OCI-LY7 (cell line): ENCODE measurements at regions of chr10 and their contacts with region 1.

Region 1: GRCh38 chr10:103367782-103368518 is at the start of gene TAF5:
- DNase-seq: peak; percentile 98
- H3K4me3 ChIP-seq: peak within 1 kb of the TSS; percentile 84
- H3K27ac ChIP-seq: peak within 1 kb of the TSS; percentile 73
- H3K4me1 ChIP-seq: peaks cover 26% of the 10 kb centered on the region
- CTCF ChIP-seq: no peak
- total RNA-seq, gene TAF5: 15.9 and 20.2 TPM in 2 replicates

Region 2: GRCh38 chr10:103350501-103351260 is 17.3 kb before region 1 on chr10 and contains the start of gene PCGF6:
- CTCF ChIA-PET with region 1: interaction called, 4 read pairs
- POLR2A ChIA-PET with region 1: interaction called, 17 read pairs
- intact Hi-C with region 1: loop called (anchors 2 kb)
- DNase-seq: peak; percentile 90
- H3K4me3 ChIP-seq: peak within 1 kb of the TSS; percentile 79
- H3K27ac ChIP-seq: peak within 1 kb of the TSS; percentile 46
- H3K4me1 ChIP-seq: peaks cover 18% of the 10 kb centered on the region
- CTCF ChIP-seq: no peak
- total RNA-seq, gene PCGF6: 14.9 and 16.0 TPM in 2 replicates

Region 3: GRCh38 chr10:103396064-103396788 is 28.3 kb after region 1 on chr10 and contains the starts of genes ATP5MK and PDCD11:
- CTCF ChIA-PET with region 1: no interaction called
- POLR2A ChIA-PET with region 1: no interaction called
- intact Hi-C with region 1: loop called (anchors 1 kb)
- DNase-seq: peak; percentile 99
- H3K4me3 ChIP-seq: peak within 1 kb of the TSS; percentile 89
- H3K27ac ChIP-seq: peak within 1 kb of the TSS; percentile 55
- H3K4me1 ChIP-seq: peaks cover 31% of the 10 kb centered on the region
- CTCF ChIP-seq: no peak; the same call in 1 of the 2 replicates
- total RNA-seq, gene ATP5MK: 74.7 and 117 TPM in 2 replicates
- total RNA-seq, gene PDCD11: 54.5 and 62.9 TPM in 2 replicates

Region 4: GRCh38 chr10:103473261-103473671 is 105.3 kb after region 1 on chr10:
- CTCF ChIA-PET with region 1: no interaction called
- POLR2A ChIA-PET with region 1: no interaction called
- intact Hi-C with region 1: no loop called
- DNase-seq: no peak
- H3K4me3 ChIP-seq: no peak overlapping the region
- H3K27ac ChIP-seq: no peak overlapping the region
- H3K4me1 ChIP-seq: peaks cover 76% of the 10 kb centered on the region
- CTCF ChIP-seq: no peak